ENCODE measurements at regions of chr15 and their contacts with region 1.

Region 1: GRCh38 chr15:66851226-66852071 is 149.4 kb downstream of the SMAD6 start:
- DNase-seq: peak; percentile 54 to 90
- H3K4me3 ChIP-seq: no peak overlapping the region
- H3K27ac ChIP-seq: no peak overlapping the region
- H3K4me1 ChIP-seq: no peaks in the 10 kb centered on the region; a peak in 2 of 7 replicates
- H3K27me3 ChIP-seq: peaks cover 0 to 11% (median 6%) of the 10 kb centered on the region in 4 experiments; a peak in 5 of 7 replicates
- CTCF ChIP-seq: peak; percentile 95 to 97 (median 96)
- EP300 ChIP-seq: no peak
- POLR2A ChIP-seq: no peak
- RAD21 ChIP-seq: peak; percentile 80 to 90

Region 2: DNA sequence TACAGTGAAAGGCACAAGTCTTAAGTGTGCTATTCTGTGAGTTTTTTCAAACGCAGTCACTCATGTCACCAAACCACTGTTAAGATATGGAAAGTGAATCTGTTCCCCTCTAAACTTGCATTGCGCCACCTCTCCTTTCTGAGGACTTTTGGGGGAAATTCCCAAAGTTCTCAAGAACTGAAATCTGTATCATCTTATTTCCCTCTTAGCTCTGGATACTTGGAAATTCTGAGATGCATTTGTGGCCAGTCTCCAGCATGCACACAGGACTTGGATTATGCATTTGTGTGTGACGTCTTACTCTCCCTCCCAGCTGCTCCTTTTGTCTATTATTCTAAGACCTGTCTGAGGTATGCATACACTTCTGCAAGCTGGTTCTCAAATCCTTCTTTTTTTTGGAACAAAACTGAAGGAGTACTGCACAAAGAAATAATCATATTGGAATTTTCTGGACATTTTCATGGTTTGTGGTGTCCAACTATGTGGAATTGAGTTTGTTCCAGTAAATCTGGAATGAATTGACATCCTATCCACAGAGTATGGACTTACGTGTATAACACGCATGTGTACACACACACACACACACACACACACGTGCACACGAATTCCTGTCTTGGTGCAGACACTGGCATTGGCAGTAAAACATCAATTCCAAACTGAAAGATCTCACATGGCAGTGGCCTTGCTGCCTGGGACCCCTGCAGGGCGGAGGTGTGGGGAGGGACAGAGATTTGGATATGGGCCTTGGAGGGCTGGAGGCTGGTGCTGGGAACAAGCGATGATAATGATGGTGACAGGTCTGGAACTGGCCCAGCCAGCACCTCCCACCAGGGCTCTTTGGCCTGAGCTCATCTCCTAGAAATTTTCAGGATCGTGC is 277.5 kb before region 1 on chr15:
- CTCF ChIA-PET with region 1: interaction called, 13 read pairs
- POLR2A ChIA-PET with region 1: no interaction called
- DNase-seq: no peak
- H3K4me3 ChIP-seq: no peak overlapping the region
- H3K27ac ChIP-seq: no peak overlapping the region
- H3K4me1 ChIP-seq: no peaks in the 10 kb centered on the region
- H3K27me3 ChIP-seq: no peaks in the 10 kb centered on the region
- CTCF ChIP-seq: no peak
- EP300 ChIP-seq: no peak
- POLR2A ChIP-seq: no peak
- RAD21 ChIP-seq: no peak

Region 3: DNA sequence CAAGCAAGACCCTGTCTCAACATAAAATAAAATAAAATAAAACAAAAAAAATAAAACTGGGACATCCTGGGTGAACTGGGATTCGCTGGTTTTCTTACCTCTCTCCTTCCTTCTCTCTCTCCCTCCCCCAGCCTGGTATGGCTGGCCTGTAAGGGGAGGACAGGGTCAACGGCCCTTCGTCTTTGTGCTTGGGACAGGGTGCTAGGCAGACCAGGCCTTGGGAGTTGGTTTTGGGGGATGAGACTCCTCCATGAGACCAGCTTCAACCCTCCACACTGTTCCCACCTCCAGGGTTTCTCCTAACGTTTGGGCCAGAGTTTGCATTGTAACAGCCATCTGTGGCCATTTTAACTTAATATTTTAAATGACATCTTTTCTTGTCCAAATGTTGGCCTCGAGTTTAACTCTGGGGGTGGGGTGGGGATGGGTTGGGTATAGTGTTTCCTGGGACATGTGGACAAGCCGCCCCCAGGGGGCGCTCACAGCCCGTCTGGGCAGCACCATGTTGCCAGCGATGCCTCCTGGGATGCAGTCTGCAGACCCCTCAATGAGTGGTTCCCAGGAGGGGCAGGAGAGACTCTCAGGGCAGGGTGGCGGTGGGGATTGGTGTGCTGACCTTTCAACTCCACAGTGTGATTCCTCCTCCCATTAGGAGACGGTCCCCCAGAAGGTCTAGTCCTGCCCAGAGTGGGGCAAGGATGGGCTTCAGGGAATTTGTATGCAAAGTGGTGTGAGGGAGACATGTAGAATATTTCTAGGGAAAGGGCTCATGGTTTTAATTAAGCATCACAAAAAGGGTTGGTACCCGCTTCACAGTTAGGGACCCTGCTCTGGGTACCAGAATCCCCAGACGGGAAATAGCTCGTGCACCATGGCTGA is 247.9 kb before region 1 on chr15:
- CTCF ChIA-PET with region 1: interaction called, 105 read pairs
- POLR2A ChIA-PET with region 1: no interaction called
- DNase-seq: peak; percentile 67 to 91
- H3K4me3 ChIP-seq: no peak overlapping the region
- H3K27ac ChIP-seq: no peak overlapping the region
- H3K4me1 ChIP-seq: no peaks in the 10 kb centered on the region
- H3K27me3 ChIP-seq: no peaks in the 10 kb centered on the region
- CTCF ChIP-seq: peak; percentile 83 to 94 (median 83)
- EP300 ChIP-seq: no peak
- POLR2A ChIP-seq: no peak
- RAD21 ChIP-seq: peak; percentile 94 to 95

Region 4: GRCh38 chr15:66692808-66693596 is 158.4 kb before region 1 on chr15:
- CTCF ChIA-PET with region 1: interaction called, 17 read pairs
- POLR2A ChIA-PET with region 1: no interaction called
- DNase-seq: no peak
- H3K4me3 ChIP-seq: no peak overlapping the region
- H3K27ac ChIP-seq: no peak overlapping the region
- H3K4me1 ChIP-seq: no peaks in the 10 kb centered on the region
- H3K27me3 ChIP-seq: no peaks in the 10 kb centered on the region
- CTCF ChIP-seq: no peak
- EP300 ChIP-seq: no peak
- POLR2A ChIP-seq: no peak
- RAD21 ChIP-seq: no peak

Region 5: GRCh38 chr15:66714543-66714981 is 136.9 kb before region 1 on chr15:
- CTCF ChIA-PET with region 1: interaction called, 57 read pairs
- POLR2A ChIA-PET with region 1: no interaction called
- DNase-seq: no peak
- H3K4me3 ChIP-seq: no peak overlapping the region
- H3K27ac ChIP-seq: no peak overlapping the region
- H3K4me1 ChIP-seq: peaks cover 0 to 4% (median 2%) of the 10 kb centered on the region in 4 experiments; a peak in 4 of 7 replicates
- H3K27me3 ChIP-seq: no peaks in the 10 kb centered on the region
- CTCF ChIP-seq: no peak
- EP300 ChIP-seq: no peak
- POLR2A ChIP-seq: no peak
- RAD21 ChIP-seq: no peak

Region 6: GRCh38 chr15:66789029-66790025 is 62.1 kb before region 1 on chr15:
- CTCF ChIA-PET with region 1: interaction called, 201 read pairs
- POLR2A ChIA-PET with region 1: no interaction called
- DNase-seq: no peak
- H3K4me3 ChIP-seq: no peak overlapping the region
- H3K27ac ChIP-seq: no peak overlapping the region
- H3K4me1 ChIP-seq: no peaks in the 10 kb centered on the region
- H3K27me3 ChIP-seq: no peaks in the 10 kb centered on the region; a peak in 1 of 7 replicates
- CTCF ChIP-seq: peak; percentile 56 to 72 (median 68)
- EP300 ChIP-seq: no peak
- POLR2A ChIP-seq: no peak
- RAD21 ChIP-seq: peak; percentile 60 to 71

Region 7: DNA sequence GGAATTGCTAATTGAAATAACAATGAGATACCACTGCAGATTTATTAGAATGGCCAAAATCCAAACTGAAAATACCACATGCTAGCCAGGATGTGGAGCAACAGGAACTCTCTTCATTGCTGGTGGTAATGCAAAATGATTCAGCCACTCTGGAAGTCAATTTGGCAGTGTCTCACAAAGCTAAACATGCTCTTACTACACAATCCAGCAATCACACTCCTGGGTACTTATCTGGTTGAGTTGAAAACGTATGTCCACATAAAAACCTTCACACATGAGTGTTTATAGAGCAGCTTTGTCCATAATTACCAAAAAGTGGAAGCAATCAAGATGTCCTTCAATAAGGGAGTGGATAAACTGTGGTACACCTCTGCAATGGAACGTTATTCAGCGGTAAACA is 36.1 kb before region 1 on chr15:
- CTCF ChIA-PET with region 1: interaction called, 17 read pairs
- POLR2A ChIA-PET with region 1: interaction called, 3 read pairs
- DNase-seq: no peak
- H3K4me3 ChIP-seq: no peak overlapping the region
- H3K27ac ChIP-seq: no peak overlapping the region
- H3K4me1 ChIP-seq: no peaks in the 10 kb centered on the region
- H3K27me3 ChIP-seq: no peaks in the 10 kb centered on the region
- CTCF ChIP-seq: no peak
- EP300 ChIP-seq: no peak
- POLR2A ChIP-seq: no peak
- RAD21 ChIP-seq: no peak